ENCODE measurements at regions of chr2 and their contacts with region 1.

Region 1: DNA sequence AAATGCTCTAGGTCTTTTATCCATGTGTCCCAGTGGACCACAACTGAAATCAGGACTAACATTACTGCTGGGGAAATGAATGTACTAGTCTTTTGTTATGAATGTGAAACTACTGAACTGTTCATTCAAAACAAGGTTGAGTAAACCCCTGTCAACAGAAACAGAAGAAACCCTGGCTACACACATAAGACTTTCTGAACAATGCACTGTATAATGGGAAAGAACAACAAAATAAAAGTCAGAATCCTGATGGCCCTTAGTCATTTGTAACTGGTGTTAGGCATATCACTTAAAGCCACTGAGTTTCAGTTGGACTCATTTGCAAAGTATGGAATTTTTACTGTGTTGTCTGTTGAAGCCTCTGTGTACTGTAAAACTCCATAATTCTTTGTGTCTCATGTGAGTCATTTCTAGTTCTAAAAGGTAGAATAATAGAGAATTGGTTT is 77.0 kb upstream of the UBXN4 start:
- DNase-seq: peak; percentile 69
- ATAC-seq: peak; percentile 86
- H3K4me3 ChIP-seq: no peak overlapping the region
- H3K27ac ChIP-seq: peak overlapping the region; percentile 60
- H3K4me1 ChIP-seq: peaks cover 7% of the 10 kb centered on the region
- H3K27me3 ChIP-seq: no peaks in the 10 kb centered on the region
- CTCF ChIP-seq: no peak

Region 2: GRCh38 chr2:135531231-135532228 is 133.1 kb before region 1 on chr2 and contains the start of gene R3HDM1:
- CTCF ChIA-PET with region 1: no interaction called
- POLR2A ChIA-PET with region 1: no interaction called
- intact Hi-C with region 1: loop called (anchors 5 kb)
- DNase-seq: peak; percentile 99
- ATAC-seq: peak; percentile 81
- H3K4me3 ChIP-seq: peak within 1 kb of the TSS; percentile 89
- H3K27ac ChIP-seq: peak within 1 kb of the TSS; percentile 81
- H3K4me1 ChIP-seq: peaks cover 18% of the 10 kb centered on the region
- H3K27me3 ChIP-seq: no peaks in the 10 kb centered on the region
- CTCF ChIP-seq: 0 out of 2 replicates have a peak, but pooled peaks have one; percentile 25
- total RNA-seq, gene R3HDM1: 12.8 and 24.4 TPM in 2 replicates

Region 3: GRCh38 chr2:135620198-135620597 is 44.4 kb before region 1 on chr2:
- CTCF ChIA-PET with region 1: no interaction called
- POLR2A ChIA-PET with region 1: no interaction called
- intact Hi-C with region 1: loop called (anchors 2 kb)
- DNase-seq: peak; percentile 31
- ATAC-seq: peak; percentile 82
- H3K4me3 ChIP-seq: no peak overlapping the region
- H3K27ac ChIP-seq: 0 out of 2 replicates have a peak overlapping the region, but pooled peaks have one; percentile 9
- H3K4me1 ChIP-seq: peaks cover 9% of the 10 kb centered on the region; the same call in 1 of the 2 replicates
- H3K27me3 ChIP-seq: no peaks in the 10 kb centered on the region
- CTCF ChIP-seq: no peak